Astrocyte of the cerebellum (primary cell): ENCODE measurements at regions of chr1 and their contacts with region 1.

Region 1: DNA sequence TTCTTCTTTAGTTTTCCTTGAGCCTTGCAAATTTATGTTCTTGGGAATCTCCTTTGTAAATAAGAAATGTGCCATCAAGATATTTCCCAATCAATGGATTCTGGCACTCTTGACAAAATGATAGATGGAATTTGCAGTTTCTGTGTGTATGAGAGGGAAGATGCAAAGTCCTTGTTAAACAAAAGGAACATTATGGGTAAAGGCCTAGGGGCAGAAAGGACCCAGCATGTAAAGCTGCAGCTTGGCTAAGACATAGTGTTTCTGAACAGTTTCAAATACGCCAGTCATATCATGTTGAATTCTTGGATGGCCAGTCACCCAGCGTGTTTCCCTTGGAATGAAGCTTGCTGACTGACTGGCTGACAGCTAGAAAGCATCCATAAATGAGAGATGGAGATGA is 210.8 kb downstream of the NFIA start:
- DNase-seq: no peak
- H3K4me3 ChIP-seq: no peak overlapping the region
- CTCF ChIP-seq: no peak

Region 2: DNA sequence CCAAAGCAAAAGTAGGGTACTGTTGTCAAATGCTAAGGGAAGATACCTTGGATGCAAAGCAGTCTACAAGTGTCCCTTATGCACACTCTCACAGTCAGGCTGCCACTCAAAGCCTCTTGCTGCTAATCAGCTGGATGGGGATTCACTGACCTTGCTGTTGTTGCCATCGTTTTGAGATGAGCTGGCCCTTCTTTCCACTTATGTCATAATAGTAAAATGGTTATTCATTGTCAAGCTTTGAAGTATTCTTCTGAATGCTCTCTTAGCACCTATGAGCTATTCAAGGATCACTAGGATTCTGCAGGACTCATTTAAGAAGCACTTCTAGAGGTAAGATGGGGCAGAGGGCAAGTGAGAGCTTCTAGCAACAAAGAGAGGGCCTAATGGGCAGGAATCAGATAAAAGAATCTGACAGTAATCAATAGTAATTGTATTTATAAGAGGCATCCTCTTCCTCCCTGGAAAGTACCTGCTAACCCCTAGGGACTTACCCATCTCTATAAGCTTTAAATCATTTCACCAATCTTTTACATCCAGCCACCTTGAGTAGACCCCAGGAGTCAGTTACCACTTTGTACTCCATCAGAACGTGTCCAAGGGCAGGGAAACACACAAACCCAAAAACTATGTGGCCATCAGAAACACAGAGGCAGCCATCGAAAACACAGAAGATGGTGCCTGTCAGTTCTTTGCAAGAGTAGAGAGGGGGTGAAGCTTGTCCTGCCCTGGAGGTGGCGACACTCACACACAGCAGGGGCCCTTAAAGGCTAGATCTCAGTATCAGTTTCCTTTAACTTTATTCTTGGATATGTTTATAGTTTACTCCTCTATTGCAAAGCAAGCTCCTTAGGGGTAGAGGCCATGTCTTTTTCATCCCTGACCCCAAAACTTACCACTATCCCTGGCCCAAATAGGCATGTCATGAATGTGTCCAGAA is 314.5 kb before region 1 on chr1:
- in situ Hi-C with region 1: no loop called
- DNase-seq: no peak
- H3K4me3 ChIP-seq: no peak overlapping the region
- CTCF ChIP-seq: peak; percentile 43

Region 3: GRCh38 chr1:61332196-61332753 is 39.1 kb after region 1 on chr1:
- in situ Hi-C with region 1: loop called (anchors 5 kb)
- DNase-seq: no peak
- H3K4me3 ChIP-seq: no peak overlapping the region
- CTCF ChIP-seq: no peak